Left lung (tissue), 14 donors: ENCODE measurements at regions of chr11 and their contacts with region 1.

Region 1: DNA sequence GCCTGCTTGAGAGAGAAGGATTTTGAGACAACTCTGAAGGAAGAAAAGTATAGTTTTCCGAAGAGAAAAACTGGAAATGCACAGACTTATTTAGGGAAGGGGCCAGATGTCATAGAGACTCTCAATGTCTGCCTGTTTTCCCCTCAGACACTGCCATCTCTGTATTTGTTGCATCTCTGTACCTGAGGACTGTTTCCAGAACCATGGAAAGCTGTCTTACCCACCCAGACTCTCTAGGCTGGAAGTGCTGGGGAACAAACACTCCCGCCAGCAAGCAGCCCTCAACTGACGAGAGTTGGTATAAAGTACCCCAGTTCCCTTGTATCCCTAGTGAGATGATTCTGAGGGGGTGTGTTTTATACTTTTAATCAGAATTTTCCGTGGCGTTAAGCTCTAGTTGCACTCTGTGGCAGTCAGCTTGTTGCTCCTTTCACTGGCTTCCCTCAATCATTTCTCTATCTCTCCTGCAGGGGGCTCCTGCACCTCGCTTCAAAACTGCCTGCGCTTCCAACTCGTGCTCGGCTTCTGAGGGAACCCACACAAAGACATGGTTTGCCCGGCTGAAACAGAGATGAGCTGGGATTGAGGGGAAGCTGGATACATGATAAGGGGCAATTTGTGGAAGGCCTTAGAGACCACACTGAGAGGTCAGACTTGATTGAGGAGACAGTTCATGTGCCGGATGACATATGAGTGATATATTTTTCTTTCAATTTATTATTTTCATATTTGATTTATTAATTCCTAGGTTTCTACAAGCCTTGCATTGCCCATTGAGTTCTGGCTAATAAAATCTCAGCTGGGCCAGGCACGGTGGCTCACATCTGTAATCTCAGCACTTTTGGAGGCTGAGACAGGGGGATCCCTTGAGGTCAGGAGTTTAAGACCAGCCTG is 36.9 kb upstream of the CLPB start:
- DNase-seq: peak in 3 of 4 donors; percentile 46 to 74 (median 59)
- ATAC-seq: peak; percentile 99
- H3K4me3 ChIP-seq: no peak overlapping the region
- H3K27ac ChIP-seq: no peak overlapping the region
- H3K4me1 ChIP-seq: no peaks in the 10 kb centered on the region
- H3K27me3 ChIP-seq: peaks cover 0 to 63% of the 10 kb centered on the region in 2 donors
- CTCF ChIP-seq: peak; percentile 73

Region 2: GRCh38 chr11:72642884-72643511 is 171.7 kb after region 1 on chr11:
- intact Hi-C with region 1: loop called in 1 of 2 experiments (anchors 10 kb)
- DNase-seq: peak; percentile 56 to 92 (median 64)
- ATAC-seq: peak; percentile 92
- H3K4me3 ChIP-seq: peak overlapping the region; percentile 33 to 42
- H3K27ac ChIP-seq: no peak overlapping the region
- H3K4me1 ChIP-seq: peaks cover 7 to 21% of the 10 kb centered on the region in 2 donors
- H3K27me3 ChIP-seq: peaks cover 11 to 60% of the 10 kb centered on the region in 2 donors
- CTCF ChIP-seq: peak; percentile 94 to 95

Region 3: DNA sequence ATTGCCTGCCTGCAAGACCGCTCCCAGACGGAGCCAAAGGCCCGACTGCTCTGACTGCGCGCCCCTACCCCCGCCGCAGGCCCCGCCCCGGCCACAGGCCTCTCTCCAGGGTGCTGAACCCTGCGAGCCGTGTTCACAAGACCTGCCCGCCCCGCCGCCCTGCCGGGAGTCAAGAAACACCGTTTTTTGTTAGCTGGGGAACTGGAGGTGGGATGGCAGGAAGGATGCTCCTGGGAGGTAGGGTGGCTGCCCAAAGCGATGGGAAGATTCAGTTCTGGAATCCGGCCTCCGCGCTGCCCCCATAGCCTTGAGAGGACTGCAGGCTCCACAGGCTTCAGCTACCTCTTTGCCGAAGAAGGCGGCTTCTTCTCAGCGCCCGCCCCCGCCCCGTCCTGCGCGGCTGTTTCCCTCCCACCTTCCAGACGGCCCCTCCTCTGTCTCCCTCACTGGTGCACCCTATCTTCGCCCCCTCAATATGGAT is 205.6 kb after region 1 on chr11:
- intact Hi-C with region 1: loop called in 1 of 2 experiments (anchors 10 kb)
- DNase-seq: peak; percentile 60 to 90 (median 71)
- ATAC-seq: peak; percentile 67
- H3K4me3 ChIP-seq: no peak overlapping the region
- H3K27ac ChIP-seq: no peak overlapping the region
- H3K4me1 ChIP-seq: peaks cover 0 to 5% of the 10 kb centered on the region in 2 donors
- H3K27me3 ChIP-seq: peaks cover 10 to 87% of the 10 kb centered on the region in 2 donors
- CTCF ChIP-seq: no peak